ENCODE measurements at regions of chr4 and their contacts with region 1.

Region 1: DNA sequence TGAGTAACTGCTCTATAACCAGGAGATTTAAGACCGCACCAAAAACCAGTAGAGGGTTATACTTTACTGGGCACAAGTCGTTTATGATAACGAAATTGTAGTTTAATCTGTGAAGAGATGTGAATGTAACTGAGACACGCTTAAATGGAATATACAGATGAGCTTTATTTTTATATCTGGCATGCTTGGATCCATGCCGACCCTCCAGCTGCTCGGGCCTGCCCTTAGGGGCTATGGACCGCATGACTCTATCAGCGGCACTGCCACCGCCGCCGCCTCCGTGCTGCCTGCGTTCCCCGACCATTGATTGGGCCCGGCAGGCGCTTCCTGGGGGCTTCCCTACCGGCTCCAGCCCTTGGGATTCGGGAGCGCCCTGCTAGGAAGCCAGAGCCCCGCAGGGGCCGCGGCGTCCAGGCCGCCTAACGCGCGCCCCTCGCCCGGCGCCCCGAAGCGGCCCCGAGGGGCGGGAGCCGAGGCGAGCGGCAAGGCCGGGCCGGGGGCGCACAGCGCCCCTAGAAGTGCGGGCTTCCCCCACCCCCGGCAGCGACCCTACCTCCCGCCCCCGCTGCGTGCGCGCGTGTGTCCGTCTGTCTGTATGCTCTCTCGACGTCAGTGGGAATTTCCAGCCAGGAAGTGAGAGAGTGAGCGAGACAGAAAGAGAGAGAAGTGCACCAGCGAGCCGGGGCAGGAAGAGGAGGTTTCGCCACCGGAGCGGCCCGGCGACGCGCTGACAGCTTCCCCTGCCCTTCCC is at the start of gene NFKB1:
- DNase-seq: peak; percentile 94
- ATAC-seq: peak; percentile 68
- H3K4me3 ChIP-seq: peak within 1 kb of the TSS; percentile 88 to 99 (median 97)
- H3K4me3 Mint-ChIP-seq: peak within 1 kb of the TSS; percentile 98
- H3K27ac ChIP-seq: peak within 1 kb of the TSS; percentile 99
- H3K27ac Mint-ChIP-seq: peak within 1 kb of the TSS; percentile 95
- H3K4me1 ChIP-seq: peaks cover 17 to 33% of the 10 kb centered on the region in 2 donors
- H3K4me1 Mint-ChIP-seq: peaks cover 36% of the 10 kb centered on the region
- H3K27me3 ChIP-seq: no peaks in the 10 kb centered on the region
- H3K27me3 Mint-ChIP-seq: no peaks in the 10 kb centered on the region
- CTCF ChIP-seq: peak; percentile 3
- total RNA-seq, gene NFKB1: 88.1 and 96.4 TPM in 2 replicates

Region 2: GRCh38 chr4:101347557-101348366 is 1153.1 kb before region 1 on chr4:
- CTCF ChIA-PET with region 1: no interaction called
- POLR2A ChIA-PET with region 1: interaction called, 7 read pairs
- intact Hi-C with region 1: loop called (anchors 5 kb)
- DNase-seq: peak; percentile 98
- ATAC-seq: peak; percentile 80
- H3K4me3 ChIP-seq: peak overlapping the region; percentile 77 to 96 (median 95)
- H3K4me3 Mint-ChIP-seq: peak overlapping the region; percentile 99
- H3K27ac ChIP-seq: peak overlapping the region; percentile 85 to 87
- H3K27ac Mint-ChIP-seq: peak overlapping the region; percentile 95
- H3K4me1 ChIP-seq: peaks cover 22 to 36% of the 10 kb centered on the region in 2 donors
- H3K4me1 Mint-ChIP-seq: peaks cover 42% of the 10 kb centered on the region
- H3K27me3 ChIP-seq: no peaks in the 10 kb centered on the region
- H3K27me3 Mint-ChIP-seq: no peaks in the 10 kb centered on the region
- CTCF ChIP-seq: no peak

Region 3: DNA sequence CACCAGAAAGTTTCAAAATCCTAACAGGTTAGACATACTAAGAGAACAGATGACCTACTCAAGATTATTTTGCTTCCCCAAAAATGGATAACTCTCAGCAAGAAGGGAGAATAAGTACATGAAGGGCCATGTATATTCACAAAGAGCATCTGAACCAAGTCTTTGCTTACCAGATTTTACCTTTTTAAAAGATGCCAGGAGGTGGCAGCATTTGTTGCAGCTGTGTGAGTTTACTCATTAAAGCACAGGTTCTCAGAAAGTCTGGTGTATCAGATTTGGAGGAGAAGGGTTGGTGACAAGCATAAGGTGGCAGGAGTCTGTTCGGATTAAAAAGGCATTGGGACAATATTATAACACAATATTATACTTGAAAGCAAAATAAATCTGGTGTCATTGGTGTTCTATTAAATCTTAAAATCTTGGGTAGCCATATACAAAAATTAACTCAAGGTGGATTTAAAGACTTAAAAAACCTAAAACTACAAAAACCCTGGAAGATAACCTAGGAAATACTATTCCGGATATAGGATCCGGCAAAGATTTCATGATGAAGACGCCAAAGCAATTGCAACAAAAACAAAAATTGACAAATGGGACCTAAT is 51.0 kb before region 1 on chr4:
- CTCF ChIA-PET with region 1: no interaction called
- POLR2A ChIA-PET with region 1: no interaction called
- intact Hi-C with region 1: loop called (anchors 5 kb)
- DNase-seq: peak; percentile 76
- ATAC-seq: peak; percentile 60
- H3K4me3 ChIP-seq: no peak overlapping the region
- H3K4me3 Mint-ChIP-seq: no peak overlapping the region
- H3K27ac ChIP-seq: no peak overlapping the region
- H3K27ac Mint-ChIP-seq: no peak overlapping the region
- H3K4me1 ChIP-seq: peaks cover 4 to 8% of the 10 kb centered on the region in 2 donors
- H3K4me1 Mint-ChIP-seq: peaks cover 5% of the 10 kb centered on the region
- H3K27me3 ChIP-seq: no peaks in the 10 kb centered on the region
- H3K27me3 Mint-ChIP-seq: no peaks in the 10 kb centered on the region
- CTCF ChIP-seq: peak; percentile 71

Region 4: DNA sequence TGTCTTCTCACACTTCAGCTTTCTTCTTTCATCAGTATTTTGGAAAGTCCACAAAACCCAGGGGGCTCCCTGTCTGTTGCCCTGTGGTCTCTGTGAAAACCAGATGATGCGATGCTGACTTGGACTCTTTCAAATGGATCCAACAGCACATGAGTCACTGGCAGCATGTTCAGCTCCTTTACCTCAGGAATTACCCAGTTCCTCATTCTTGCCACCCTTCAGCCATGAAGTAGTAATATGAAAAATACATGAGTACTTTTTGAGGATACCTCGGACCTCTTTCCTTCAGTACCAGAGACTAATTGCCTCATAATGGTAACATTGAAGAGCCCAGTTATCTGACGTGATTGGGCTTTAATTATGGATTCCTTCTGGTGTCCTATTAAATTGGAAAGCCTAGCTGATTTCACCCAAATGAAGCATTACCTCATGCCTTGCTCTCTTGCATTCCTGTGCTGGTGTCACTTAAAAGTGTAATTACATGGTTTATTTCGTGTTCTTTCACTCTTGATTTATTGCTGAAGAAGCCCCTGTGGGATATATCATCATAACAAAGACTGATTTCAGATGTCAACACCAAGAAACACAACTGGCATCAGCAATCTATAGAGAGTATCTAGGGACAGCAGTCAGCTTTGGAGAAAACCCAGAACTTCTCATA is 63.7 kb after region 1 on chr4:
- CTCF ChIA-PET with region 1: interaction called, 4 read pairs
- POLR2A ChIA-PET with region 1: no interaction called
- intact Hi-C with region 1: loop called (anchors 1 kb)
- DNase-seq: peak; percentile 79
- ATAC-seq: peak; percentile 91
- H3K4me3 ChIP-seq: no peak overlapping the region
- H3K4me3 Mint-ChIP-seq: peak overlapping the region; percentile 65
- H3K27ac ChIP-seq: peak overlapping the region in 1 of 2 donors; percentile 5
- H3K27ac Mint-ChIP-seq: peak overlapping the region; percentile 78
- H3K4me1 ChIP-seq: peaks cover 4 to 8% of the 10 kb centered on the region in 2 donors
- H3K4me1 Mint-ChIP-seq: peaks cover 59% of the 10 kb centered on the region
- H3K27me3 ChIP-seq: no peaks in the 10 kb centered on the region
- H3K27me3 Mint-ChIP-seq: no peaks in the 10 kb centered on the region
- CTCF ChIP-seq: no peak

Region 5: DNA sequence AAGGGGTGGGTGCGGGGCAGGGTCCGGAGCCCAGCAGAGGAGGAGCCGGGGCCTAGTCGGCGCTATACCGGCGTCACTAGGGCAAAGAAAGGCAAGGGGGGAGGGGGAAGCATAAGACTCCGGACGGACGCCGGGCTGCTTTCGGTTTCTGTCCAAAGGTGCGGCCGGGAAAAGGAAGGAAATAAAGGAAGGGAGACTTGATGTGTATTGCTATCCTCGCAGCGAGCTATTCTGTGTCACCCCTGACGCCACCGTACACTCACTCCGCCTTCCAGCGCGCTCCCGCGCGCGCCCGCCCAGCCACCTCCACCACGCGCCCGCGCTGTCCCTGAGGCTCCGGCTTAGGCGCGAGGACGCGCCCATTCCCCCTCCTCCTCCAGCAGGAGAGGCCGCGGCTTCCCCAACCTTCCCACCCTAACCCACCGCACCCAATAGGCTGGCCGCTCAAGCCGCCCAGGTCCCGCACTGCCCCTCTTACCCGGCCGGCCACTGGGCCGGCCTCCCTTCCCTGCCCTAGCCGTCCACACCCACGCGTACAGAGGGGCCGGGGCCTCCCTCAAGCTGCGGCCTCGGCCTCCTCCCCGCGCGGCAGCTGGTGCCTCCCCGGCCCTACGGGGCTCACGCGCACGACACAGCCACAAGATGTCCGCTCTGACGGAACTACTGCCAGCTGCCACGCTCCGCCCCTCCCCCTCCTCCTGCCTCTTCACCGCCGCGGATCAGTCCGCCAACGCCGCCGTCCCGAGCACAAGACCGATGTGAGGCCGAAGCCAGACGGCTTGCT is 326.2 kb after region 1 on chr4 and contains the start of gene UBE2D3:
- CTCF ChIA-PET with region 1: no interaction called
- POLR2A ChIA-PET with region 1: interaction called, 8 read pairs
- intact Hi-C with region 1: loop called (anchors 2 kb)
- DNase-seq: peak; percentile 99
- ATAC-seq: peak; percentile 48
- H3K4me3 ChIP-seq: peak within 1 kb of the TSS; percentile 96 to 100 (median 98)
- H3K4me3 Mint-ChIP-seq: no peak within 1 kb of the TSS
- H3K27ac ChIP-seq: peak within 1 kb of the TSS; percentile 100
- H3K27ac Mint-ChIP-seq: no peak within 1 kb of the TSS
- H3K4me1 ChIP-seq: peaks cover 33 to 34% of the 10 kb centered on the region in 2 donors
- H3K4me1 Mint-ChIP-seq: peaks cover 38% of the 10 kb centered on the region
- H3K27me3 ChIP-seq: no peaks in the 10 kb centered on the region
- H3K27me3 Mint-ChIP-seq: no peaks in the 10 kb centered on the region
- CTCF ChIP-seq: no peak
- total RNA-seq, gene UBE2D3: 261 and 264 TPM in 2 replicates

Region 6: DNA sequence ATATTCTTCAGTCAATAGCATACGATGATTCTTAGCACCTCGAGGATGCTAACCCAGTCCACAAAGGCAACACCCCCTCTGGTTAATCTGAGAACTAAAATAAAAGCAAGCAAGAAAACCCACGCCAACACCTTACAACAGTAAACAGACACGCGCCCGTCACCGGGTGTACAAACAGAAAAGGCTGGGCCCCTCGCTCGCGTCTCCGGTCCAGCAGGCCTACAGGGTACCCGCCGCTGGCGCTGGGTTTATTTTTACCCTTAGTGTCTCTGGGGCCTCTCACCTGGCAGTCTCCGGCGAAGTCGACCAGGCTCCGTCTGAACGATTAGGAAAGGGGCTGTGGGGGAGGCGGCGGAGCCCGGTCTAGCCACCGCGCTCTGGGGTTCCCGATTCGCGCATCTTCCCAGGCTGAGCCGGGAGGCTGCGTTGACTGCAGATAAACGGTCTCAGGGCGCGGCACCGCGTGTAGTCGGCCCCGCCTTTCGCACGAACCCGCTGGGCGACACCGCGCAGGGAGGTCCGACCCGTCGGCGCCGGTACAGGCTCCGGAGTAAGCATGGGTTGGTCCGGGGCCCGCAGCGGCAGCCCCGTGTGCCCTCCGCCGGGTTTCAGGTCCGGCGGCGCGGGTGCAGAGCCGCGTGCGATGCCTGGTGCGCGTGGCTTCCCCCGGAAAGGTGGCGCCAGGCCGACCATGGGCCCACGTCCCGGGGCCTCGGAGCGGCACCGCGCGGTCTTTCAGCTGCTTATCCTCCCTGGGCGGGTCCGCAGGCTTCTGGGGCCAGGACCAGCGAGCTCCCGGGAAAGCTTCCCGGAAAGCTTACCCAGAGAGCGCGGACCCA is 575.2 kb after region 1 on chr4:
- CTCF ChIA-PET with region 1: no interaction called
- POLR2A ChIA-PET with region 1: no interaction called
- intact Hi-C with region 1: loop called (anchors 5 kb)
- DNase-seq: peak; percentile 78
- ATAC-seq: peak; percentile 55
- H3K4me3 ChIP-seq: peak overlapping the region; percentile 65 to 83 (median 80)
- H3K4me3 Mint-ChIP-seq: peak overlapping the region; percentile 82
- H3K27ac ChIP-seq: peak overlapping the region; percentile 92
- H3K27ac Mint-ChIP-seq: peak overlapping the region; percentile 89
- H3K4me1 ChIP-seq: peaks cover 27 to 31% of the 10 kb centered on the region in 2 donors
- H3K4me1 Mint-ChIP-seq: peaks cover 35% of the 10 kb centered on the region
- H3K27me3 ChIP-seq: no peaks in the 10 kb centered on the region
- H3K27me3 Mint-ChIP-seq: no peaks in the 10 kb centered on the region
- CTCF ChIP-seq: peak; percentile 12